Activated CD4-positive, alpha-beta T cell treated with anti-CD3 and anti-CD28 coated beads for 36 hours (primary cell): ENCODE measurements at regions of chr10 and their contacts with region 1.

Region 1: DNA sequence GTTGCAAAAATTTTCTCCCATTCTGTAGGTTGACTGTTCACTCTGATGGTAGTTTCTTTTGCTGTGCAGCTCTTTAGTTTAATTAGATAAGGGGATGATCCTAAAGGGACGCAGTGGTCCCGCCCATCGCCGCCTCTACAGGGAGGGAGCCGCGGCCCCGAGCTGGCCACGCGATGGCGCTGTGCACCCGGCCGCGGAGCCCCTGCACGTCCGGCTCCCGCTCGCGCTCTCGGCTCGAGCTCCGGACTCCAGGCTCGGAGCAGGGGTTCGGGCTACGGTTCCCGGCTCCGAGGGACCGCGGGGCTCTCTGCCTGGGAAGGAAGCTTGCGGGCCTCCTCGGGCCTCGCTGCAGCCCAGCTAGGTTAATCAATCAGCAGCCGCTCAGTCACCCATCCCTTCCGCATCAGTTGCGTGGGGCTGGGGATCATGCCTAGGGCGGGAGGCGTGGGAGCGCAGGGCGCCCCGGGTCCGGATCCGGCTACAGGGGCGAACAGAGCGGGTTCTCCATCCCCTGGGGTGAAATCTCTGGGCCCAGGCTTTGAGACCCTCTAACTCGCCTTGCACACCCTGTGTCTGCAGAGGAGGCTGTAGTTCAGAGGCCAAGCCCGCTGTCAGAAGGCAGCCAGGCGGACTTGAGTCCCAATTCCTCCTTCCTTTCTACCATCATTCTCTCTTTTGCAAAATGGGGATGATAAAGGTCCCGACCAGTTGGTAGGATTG is 97.9 kb downstream of the WDR11 start:
- DNase-seq: peak; percentile 82
- ATAC-seq: peak; percentile 98
- H3K4me3 Mint-ChIP-seq: peak overlapping the region; percentile 12
- H3K27ac Mint-ChIP-seq: no peak overlapping the region
- H3K4me1 Mint-ChIP-seq: no peaks in the 10 kb centered on the region
- H3K27me3 Mint-ChIP-seq: peaks cover 32% of the 10 kb centered on the region

Region 2: GRCh38 chr10:121608469-121609190 is 659.6 kb after region 1 on chr10:
- CTCF ChIA-PET with region 1: interaction called, 3 read pairs
- POLR2A ChIA-PET with region 1: no interaction called
- intact Hi-C with region 1: loop called in 1 of 2 experiments (anchors 5 kb)
- DNase-seq: peak; percentile 67
- ATAC-seq: peak; percentile 84
- H3K4me3 Mint-ChIP-seq: no peak overlapping the region
- H3K27ac Mint-ChIP-seq: no peak overlapping the region
- H3K4me1 Mint-ChIP-seq: no peaks in the 10 kb centered on the region
- H3K27me3 Mint-ChIP-seq: peaks cover 27% of the 10 kb centered on the region